Uterus (tissue), 4 donors: ENCODE measurements at regions of chr17 and their contacts with region 1.

Region 1: GRCh38 chr17:68260051-68260762 is 12.4 kb downstream of the AMZ2 start:
- DNase-seq: no peak
- H3K4me3 ChIP-seq: no peak overlapping the region
- H3K27ac ChIP-seq: peak overlapping the region; percentile 66 to 83
- H3K4me1 ChIP-seq: no peaks in the 10 kb centered on the region
- H3K27me3 ChIP-seq: no peaks in the 10 kb centered on the region
- CTCF ChIP-seq: no peak
- POLR2A ChIP-seq: no peak

Region 2: GRCh38 chr17:68462381-68463210 is 202.4 kb after region 1 on chr17:
- intact Hi-C with region 1: loop called (anchors 5 kb)
- DNase-seq: peak; percentile 63 to 72
- H3K4me3 ChIP-seq: no peak overlapping the region
- H3K27ac ChIP-seq: peak overlapping the region in 1 of 2 donors; percentile 39
- H3K4me1 ChIP-seq: no peaks in the 10 kb centered on the region
- H3K27me3 ChIP-seq: no peaks in the 10 kb centered on the region
- CTCF ChIP-seq: peak; percentile 68 to 87 (median 78)
- POLR2A ChIP-seq: no peak